Dendritic cell treated with granulocyte-macrophage colony-stimulating factor and Interleukin-4, amounts not matched to agents 40 ng/mL and 50 ng/mL, for 4 days (primary cell): ENCODE measurements at regions of chr19 and their contacts with region 1.

Region 1: GRCh38 chr19:44164673-44165512 is at the start of gene ZNF226:
- H3K4me3 Mint-ChIP-seq: peak within 1 kb of the TSS; percentile 94
- H3K27ac Mint-ChIP-seq: peak within 1 kb of the TSS; percentile 98
- H3K4me1 Mint-ChIP-seq: peaks cover 13% of the 10 kb centered on the region
- H3K27me3 Mint-ChIP-seq: no peaks in the 10 kb centered on the region

Region 2: GRCh38 chr19:44093931-44094765 is 70.7 kb before region 1 on chr19 and contains the start of gene ZNF224:
- intact Hi-C with region 1: loop called (anchors 1 kb)
- H3K4me3 Mint-ChIP-seq: peak within 1 kb of the TSS; percentile 95
- H3K27ac Mint-ChIP-seq: peak within 1 kb of the TSS; percentile 93
- H3K4me1 Mint-ChIP-seq: peaks cover 7% of the 10 kb centered on the region
- H3K27me3 Mint-ChIP-seq: peaks cover 3% of the 10 kb centered on the region

Region 3: GRCh38 chr19:44141191-44142058 is 23.5 kb before region 1 on chr19 and contains the start of gene ZNF234:
- intact Hi-C with region 1: loop called (anchors 1 kb)
- H3K4me3 Mint-ChIP-seq: peak within 1 kb of the TSS; percentile 98
- H3K27ac Mint-ChIP-seq: peak within 1 kb of the TSS; percentile 98
- H3K4me1 Mint-ChIP-seq: peaks cover 17% of the 10 kb centered on the region
- H3K27me3 Mint-ChIP-seq: peaks cover 3% of the 10 kb centered on the region

Region 4: GRCh38 chr19:44207126-44207803 is 42.4 kb after region 1 on chr19:
- intact Hi-C with region 1: loop called (anchors 1 kb)
- H3K4me3 Mint-ChIP-seq: peak overlapping the region; percentile 96
- H3K27ac Mint-ChIP-seq: peak overlapping the region; percentile 98
- H3K4me1 Mint-ChIP-seq: peaks cover 12% of the 10 kb centered on the region
- H3K27me3 Mint-ChIP-seq: peaks cover 11% of the 10 kb centered on the region

Region 5: GRCh38 chr19:44304659-44305193 is 139.8 kb after region 1 on chr19 and contains the start of gene ZNF235:
- intact Hi-C with region 1: loop called (anchors 10 kb)
- H3K4me3 Mint-ChIP-seq: peak within 1 kb of the TSS; percentile 83
- H3K27ac Mint-ChIP-seq: peak within 1 kb of the TSS; percentile 81
- H3K4me1 Mint-ChIP-seq: peaks cover 11% of the 10 kb centered on the region
- H3K27me3 Mint-ChIP-seq: peaks cover 3% of the 10 kb centered on the region